Activated T-helper 1 cell treated with anti-CD3 and anti-CD28 coated beads, Interleukin-12 subunit alpha, Interleukin-12 subunit beta, Interleukin-2, Interleukin-4 antibody, amounts not matched to agents 30 ng/mL and 10 ng/mL and 1 ng/mL, durations not matched to agents 14 hours and 24 hours and 36 hours (primary cell): ENCODE measurements at regions of chr22 and their contacts with region 1.

Region 1: DNA sequence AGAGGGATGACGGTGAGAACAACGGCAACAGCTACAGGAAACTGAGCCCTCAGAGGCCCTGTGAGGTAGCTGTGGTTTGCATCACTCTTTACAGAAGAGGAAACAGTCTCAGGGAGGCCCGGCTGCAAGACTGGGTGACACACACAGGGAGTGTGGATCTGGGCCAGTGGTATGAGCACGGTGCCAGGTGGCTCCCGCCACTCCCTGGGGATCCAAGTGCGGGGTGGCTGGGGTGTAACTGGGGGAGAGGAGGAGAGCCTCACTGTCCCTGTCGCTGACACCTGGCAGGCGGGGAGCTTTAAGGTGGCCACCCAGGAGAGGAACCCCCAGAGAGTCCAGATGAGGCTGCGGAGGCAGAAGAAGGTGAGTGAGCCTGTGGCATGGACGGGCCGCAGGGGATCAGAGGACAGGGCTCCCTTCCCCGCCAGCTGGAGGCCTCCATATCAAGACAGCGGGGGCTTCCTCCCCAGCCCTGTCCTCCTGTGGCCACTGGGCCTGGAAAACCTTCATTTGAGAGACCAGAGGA is 5.6 kb downstream of the RGL4 start:
- DNase-seq: peak; percentile 75
- H3K4me3 Mint-ChIP-seq: peak overlapping the region; percentile 97
- H3K27ac Mint-ChIP-seq: peak overlapping the region; percentile 100
- H3K4me1 Mint-ChIP-seq: peaks cover 41% of the 10 kb centered on the region
- H3K27me3 Mint-ChIP-seq: no peaks in the 10 kb centered on the region

Region 2: DNA sequence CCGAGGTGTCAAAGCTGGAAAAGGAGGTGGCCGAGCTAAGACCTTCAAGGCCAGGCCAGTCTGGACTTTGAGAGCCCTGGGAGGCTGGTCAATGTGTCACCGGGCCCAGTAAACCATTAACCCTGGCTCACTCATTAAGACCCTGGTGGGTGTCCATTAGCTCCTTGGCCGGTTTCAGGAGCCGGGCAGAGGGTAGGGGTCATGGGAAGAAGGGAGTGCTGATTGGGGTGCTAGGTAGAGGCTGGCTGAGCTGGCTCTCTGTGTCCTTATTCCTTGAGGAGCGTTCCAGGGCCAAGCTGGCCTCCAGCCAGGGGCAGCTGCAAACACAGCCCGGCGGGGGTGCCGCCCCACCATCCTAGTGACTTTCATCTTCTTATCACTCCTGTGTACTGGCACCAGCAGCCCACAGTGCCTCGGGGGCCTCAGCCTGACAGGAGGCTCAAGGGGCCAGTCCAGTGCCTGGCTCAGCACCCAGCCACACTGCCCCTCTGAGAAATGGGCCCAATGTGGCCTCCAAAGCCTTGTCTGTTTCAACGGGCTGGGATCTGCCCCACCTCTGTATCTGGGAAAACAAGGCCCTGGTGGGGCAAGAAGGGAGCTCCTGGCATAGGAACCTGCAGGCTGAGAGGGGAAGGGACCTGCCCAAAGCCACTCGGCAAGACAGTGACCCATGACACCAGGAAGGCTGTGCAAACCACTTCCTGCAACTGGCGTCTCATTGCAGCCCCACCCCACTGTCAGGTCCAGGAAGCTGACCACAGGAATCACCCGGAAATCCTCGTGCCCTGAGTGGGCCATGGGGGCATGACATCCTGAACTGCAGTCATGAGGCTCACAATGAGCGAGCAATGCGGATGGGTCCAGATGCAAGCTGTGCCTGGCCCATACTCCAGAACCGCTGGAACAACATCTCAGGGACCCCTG is 20.6 kb before region 1 on chr22:
- intact Hi-C with region 1: no loop called
- DNase-seq: no peak
- H3K4me3 Mint-ChIP-seq: no peak overlapping the region
- H3K27ac Mint-ChIP-seq: no peak overlapping the region
- H3K4me1 Mint-ChIP-seq: peaks cover 17% of the 10 kb centered on the region
- H3K27me3 Mint-ChIP-seq: no peaks in the 10 kb centered on the region

Region 3: DNA sequence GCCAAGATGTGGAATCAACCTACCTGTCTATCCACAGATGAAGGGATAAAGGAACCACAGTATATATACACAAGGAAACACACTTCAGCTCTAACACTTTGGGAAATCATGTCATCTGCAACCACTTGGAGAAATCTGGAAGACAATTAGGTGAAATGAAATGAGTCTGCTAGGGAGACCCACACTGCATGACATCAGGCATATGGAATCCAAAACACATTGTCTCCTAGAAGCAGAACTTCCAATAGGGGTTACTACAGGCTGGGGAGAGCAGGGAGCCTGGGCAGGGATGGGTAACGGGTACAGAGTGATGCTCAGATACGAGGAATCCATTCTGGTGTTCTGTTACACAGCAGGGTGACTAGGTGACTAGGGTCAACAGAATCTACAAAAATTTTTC is 12.7 kb after region 1 on chr22:
- intact Hi-C with region 1: loop called (anchors 1 kb)
- DNase-seq: no peak
- H3K4me3 Mint-ChIP-seq: no peak overlapping the region
- H3K27ac Mint-ChIP-seq: peak overlapping the region; percentile 66
- H3K4me1 Mint-ChIP-seq: peaks cover 74% of the 10 kb centered on the region
- H3K27me3 Mint-ChIP-seq: no peaks in the 10 kb centered on the region

Region 4: GRCh38 chr22:23716811-23717801 is 20.7 kb after region 1 on chr22:
- intact Hi-C with region 1: loop called (anchors 1 kb)
- DNase-seq: peak; percentile 81
- H3K4me3 Mint-ChIP-seq: peak overlapping the region; percentile 79
- H3K27ac Mint-ChIP-seq: peak overlapping the region; percentile 79
- H3K4me1 Mint-ChIP-seq: peaks cover 8% of the 10 kb centered on the region
- H3K27me3 Mint-ChIP-seq: peaks cover 3% of the 10 kb centered on the region

Region 5: DNA sequence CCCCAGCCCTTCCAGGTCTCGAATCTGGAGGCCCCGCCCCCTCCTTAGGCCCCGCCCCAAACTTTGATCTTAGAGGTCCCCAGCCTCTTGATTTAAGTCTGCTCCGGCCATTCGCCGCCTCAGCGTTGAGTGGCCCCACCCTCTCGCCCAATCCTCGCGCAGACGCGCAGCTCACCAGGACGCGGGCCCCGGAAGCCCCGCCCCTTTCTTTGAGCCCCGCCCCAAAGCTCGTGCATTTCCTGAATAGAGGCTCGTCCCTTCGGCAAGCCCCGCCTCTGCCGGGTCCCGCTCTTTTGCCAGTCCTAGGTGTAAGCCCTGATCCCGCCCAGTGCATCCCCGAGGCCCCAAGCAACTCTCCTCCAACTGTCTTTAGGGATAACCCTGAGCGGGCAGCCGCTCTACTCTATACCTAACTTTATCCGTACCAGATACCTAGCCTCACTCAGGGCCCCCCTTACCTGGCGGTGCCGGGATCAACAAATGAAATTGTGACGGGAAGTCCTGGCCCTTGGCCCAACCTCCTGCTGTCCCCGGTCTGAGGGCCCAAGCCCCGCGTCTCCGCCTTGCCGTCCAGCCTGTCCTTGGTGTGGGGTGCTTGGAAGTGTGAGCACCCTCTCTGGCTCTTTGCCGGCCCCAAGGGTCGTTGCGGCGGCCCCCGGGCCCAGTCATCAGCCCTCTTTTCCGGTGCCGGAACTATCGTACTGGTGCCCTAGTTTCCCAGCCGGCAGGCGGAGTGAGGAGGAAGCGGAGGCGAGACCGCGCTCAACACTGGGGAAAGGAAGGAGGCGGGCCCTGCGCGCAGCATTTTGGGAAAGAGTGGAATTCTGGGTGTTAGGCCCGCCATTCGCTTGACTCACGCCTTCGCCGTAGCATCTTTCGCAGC is 859.0 kb after region 1 on chr22 and contains the start of gene SNRPD3:
- intact Hi-C with region 1: no loop called
- DNase-seq: peak; percentile 97
- H3K4me3 Mint-ChIP-seq: peak within 1 kb of the TSS; percentile 98
- H3K27ac Mint-ChIP-seq: peak within 1 kb of the TSS; percentile 97
- H3K4me1 Mint-ChIP-seq: peaks cover 64% of the 10 kb centered on the region
- H3K27me3 Mint-ChIP-seq: no peaks in the 10 kb centered on the region
- total RNA-seq, gene SNRPD3: 155 and 158 TPM in 2 replicates